ENCODE measurements at regions of chr4 and their contacts with region 1.

Region 1: GRCh38 chr4:85798012-85798770 is 323.2 kb downstream of the ARHGAP24 start:
- DNase-seq: no peak
- H3K4me3 ChIP-seq: no peak overlapping the region
- H3K27ac ChIP-seq: no peak overlapping the region
- H3K4me1 ChIP-seq: peaks cover 0 to 9% of the 10 kb centered on the region in 2 experiments; a peak in 1 of 4 replicates
- H3K27me3 ChIP-seq: no peaks in the 10 kb centered on the region
- CTCF ChIP-seq: no peak
- EP300 ChIP-seq: no peak
- RAD21 ChIP-seq: no peak

Region 2: DNA sequence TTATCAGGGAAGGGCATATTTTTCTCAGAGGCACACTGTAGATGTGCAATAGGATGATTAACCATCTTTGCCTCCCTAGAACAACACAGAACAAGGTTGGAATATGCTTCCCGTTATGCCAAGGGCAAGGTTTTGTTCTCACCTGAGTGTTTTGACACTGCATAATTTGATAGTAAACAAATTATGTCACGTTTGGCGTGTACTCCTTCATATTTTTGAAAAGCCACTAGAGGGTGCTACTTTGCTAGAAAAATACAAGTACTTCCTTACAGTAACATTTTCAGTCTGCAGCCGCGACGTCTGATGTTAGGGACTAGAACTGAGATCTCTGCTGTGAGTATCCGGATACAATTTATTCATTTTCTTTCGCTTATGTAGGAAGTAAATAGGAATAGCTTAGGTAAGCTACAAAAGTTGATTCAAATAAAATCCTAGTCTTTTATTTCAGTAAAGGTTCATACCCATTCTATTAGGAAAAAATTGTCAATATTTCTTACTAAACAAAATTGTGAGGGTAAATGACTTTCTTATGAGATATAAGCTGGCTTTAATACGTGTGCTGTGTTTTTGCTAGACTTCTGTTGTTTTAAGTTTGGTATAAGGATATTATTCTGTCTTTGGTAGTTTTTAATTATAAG is 650.6 kb before region 1 on chr4:
- CTCF ChIA-PET with region 1: interaction called, 15 read pairs
- POLR2A ChIA-PET with region 1: no interaction called
- DNase-seq: peak; percentile 52
- H3K4me3 ChIP-seq: no peak overlapping the region
- H3K27ac ChIP-seq: no peak overlapping the region
- H3K4me1 ChIP-seq: no peaks in the 10 kb centered on the region; a peak in 1 of 4 replicates
- H3K27me3 ChIP-seq: no peaks in the 10 kb centered on the region
- CTCF ChIP-seq: peak; percentile 76
- EP300 ChIP-seq: no peak
- RAD21 ChIP-seq: peak; percentile 82

Region 3: GRCh38 chr4:85778632-85779131 is 19.5 kb before region 1 on chr4:
- CTCF ChIA-PET with region 1: interaction called, 30 read pairs
- POLR2A ChIA-PET with region 1: no interaction called
- DNase-seq: no peak
- H3K4me3 ChIP-seq: peak overlapping the region; percentile 32 to 49; a peak in 3 of 4 replicates
- H3K27ac ChIP-seq: peak overlapping the region in 1 of 2 experiments; percentile 77; a peak in 3 of 4 replicates
- H3K4me1 ChIP-seq: peaks cover 4 to 12% of the 10 kb centered on the region in 2 experiments; a peak in 3 of 4 replicates
- H3K27me3 ChIP-seq: no peaks in the 10 kb centered on the region
- CTCF ChIP-seq: no peak
- EP300 ChIP-seq: no peak
- RAD21 ChIP-seq: no peak

Region 4: DNA sequence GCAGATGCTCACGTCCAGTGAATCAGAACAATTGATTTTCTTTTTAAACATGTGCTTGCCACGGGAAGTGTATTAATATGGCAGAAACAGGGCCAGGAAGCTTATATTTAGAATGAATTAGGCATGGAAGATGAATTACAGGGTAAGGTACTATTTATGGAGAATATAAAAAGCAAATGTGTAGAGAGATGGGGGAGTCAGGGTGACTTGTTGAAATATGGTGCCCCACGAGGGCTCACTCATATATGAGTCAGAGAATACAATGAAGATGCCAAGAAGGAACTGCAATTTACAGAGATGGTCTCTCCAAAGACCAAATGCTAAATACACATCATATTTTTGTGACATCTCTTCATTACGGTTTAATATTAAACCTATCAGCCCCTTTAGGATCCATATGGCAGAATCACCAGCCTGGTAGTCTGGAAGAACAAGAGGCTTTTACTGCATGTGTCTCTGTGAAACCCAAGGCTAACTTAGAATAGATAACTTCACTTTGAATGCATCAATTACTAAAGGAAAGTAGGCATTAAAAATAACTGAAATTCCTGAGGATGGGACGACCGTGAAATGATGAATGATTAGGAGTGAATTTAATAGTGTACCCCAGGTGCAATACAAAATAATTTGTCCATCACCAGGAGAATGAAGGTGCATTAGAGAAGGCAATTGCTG is 62.0 kb after region 1 on chr4:
- CTCF ChIA-PET with region 1: interaction called, 12 read pairs
- POLR2A ChIA-PET with region 1: no interaction called
- DNase-seq: no peak
- H3K4me3 ChIP-seq: 0 out of 4 replicates have a peak overlapping the region, but pooled peaks of 1 of the 2 experiments have one; percentile 9
- H3K27ac ChIP-seq: peak overlapping the region in 1 of 2 experiments; percentile 74; a peak in 2 of 4 replicates
- H3K4me1 ChIP-seq: no peaks in the 10 kb centered on the region; a peak in 1 of 4 replicates
- H3K27me3 ChIP-seq: no peaks in the 10 kb centered on the region
- CTCF ChIP-seq: no peak
- EP300 ChIP-seq: peak in 1 of 2 experiments; percentile 12; a peak in 1 of 4 replicates
- RAD21 ChIP-seq: no peak

Region 5: GRCh38 chr4:85979276-85979675 is 181.1 kb after region 1 on chr4:
- CTCF ChIA-PET with region 1: interaction called, 11 read pairs
- POLR2A ChIA-PET with region 1: no interaction called
- DNase-seq: no peak
- H3K4me3 ChIP-seq: no peak overlapping the region
- H3K27ac ChIP-seq: no peak overlapping the region
- H3K4me1 ChIP-seq: no peaks in the 10 kb centered on the region
- H3K27me3 ChIP-seq: no peaks in the 10 kb centered on the region
- CTCF ChIP-seq: no peak
- EP300 ChIP-seq: no peak
- RAD21 ChIP-seq: no peak

Region 6: GRCh38 chr4:86043755-86044592 is 245.8 kb after region 1 on chr4:
- CTCF ChIA-PET with region 1: interaction called, 159 read pairs
- POLR2A ChIA-PET with region 1: no interaction called
- DNase-seq: peak; percentile 23
- H3K4me3 ChIP-seq: no peak overlapping the region
- H3K27ac ChIP-seq: no peak overlapping the region; a peak in 1 of 4 replicates
- H3K4me1 ChIP-seq: no peaks in the 10 kb centered on the region; a peak in 1 of 4 replicates
- H3K27me3 ChIP-seq: no peaks in the 10 kb centered on the region
- CTCF ChIP-seq: peak; percentile 79
- EP300 ChIP-seq: no peak
- RAD21 ChIP-seq: peak; percentile 87